HepG2 (cell line): ENCODE measurements at regions of chr1 and their contacts with region 1.

Region 1: DNA sequence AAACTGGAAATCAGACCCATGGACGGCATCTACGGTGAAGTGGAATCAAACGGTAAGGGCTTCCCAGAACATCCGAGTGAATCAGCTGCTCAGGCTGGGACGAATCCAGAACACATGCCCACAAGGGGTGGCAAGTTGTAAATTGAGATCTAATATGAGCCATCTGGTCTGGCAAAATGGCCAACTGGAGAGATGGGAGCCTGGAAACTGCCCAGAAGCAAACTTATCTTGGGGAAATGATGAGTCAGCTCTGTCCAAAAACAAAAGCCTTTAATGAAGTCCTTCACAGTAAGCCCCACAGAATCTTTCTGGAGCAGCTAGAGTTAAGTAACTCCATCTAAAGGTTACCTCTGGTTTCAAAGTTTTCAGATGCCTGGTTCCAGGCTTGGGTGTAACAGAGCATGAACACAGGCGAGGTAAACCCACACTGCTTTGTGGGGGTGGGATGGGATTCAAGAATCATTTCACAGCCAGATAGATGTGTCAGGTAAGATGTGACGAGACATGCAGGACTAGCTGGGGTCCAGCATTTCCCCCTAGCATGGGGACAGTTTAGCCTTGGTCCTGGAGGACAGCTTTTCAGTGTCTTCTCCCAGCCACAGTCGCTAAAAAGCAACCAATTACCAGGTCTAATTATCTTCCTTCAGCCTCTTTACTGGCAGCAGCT is 10.5 kb upstream of the SRP9 start:
- DNase-seq: peak; percentile 56
- ATAC-seq: peak; percentile 1; the same call in 2 of the 3 replicates
- H3K4me3 ChIP-seq: peak overlapping the region; percentile 14 to 69 (median 52)
- H3K27ac ChIP-seq: peak overlapping the region; percentile 79
- H3K4me1 ChIP-seq: peaks cover 90% of the 10 kb centered on the region
- H3K27me3 ChIP-seq: no peaks in the 10 kb centered on the region
- CTCF ChIP-seq: no peak
- EP300 ChIP-seq: no peak
- POLR2A ChIP-seq: peak in 1 of 2 experiments; percentile 50; a peak in 2 of 4 replicates
- RAD21 ChIP-seq: no peak

Region 2: GRCh38 chr1:225652729-225653462 is 114.2 kb before region 1 on chr1 and contains the start of gene ENAH:
- CTCF ChIA-PET with region 1: no interaction called
- POLR2A ChIA-PET with region 1: interaction called, 27 read pairs
- in situ Hi-C with region 1: loop called (anchors 5 kb)
- intact Hi-C with region 1: loop called (anchors 2 kb)
- DNase-seq: peak; percentile 49
- ATAC-seq: peak; percentile 80
- H3K4me3 ChIP-seq: peak within 1 kb of the TSS; percentile 86 to 98 (median 94)
- H3K27ac ChIP-seq: peak within 1 kb of the TSS; percentile 66
- H3K4me1 ChIP-seq: peaks cover 57% of the 10 kb centered on the region
- H3K27me3 ChIP-seq: no peaks in the 10 kb centered on the region; a peak in 1 of 5 replicates
- CTCF ChIP-seq: no peak
- EP300 ChIP-seq: no peak
- POLR2A ChIP-seq: peak in 1 of 2 experiments; percentile 60; a peak in 3 of 4 replicates
- RAD21 ChIP-seq: 0 out of 2 replicates have a peak, but pooled peaks have one; percentile 46
- total RNA-seq, gene ENAH: 58.3 and 60.2 TPM in 2 replicates

Region 3: GRCh38 chr1:225694151-225694603 is 72.9 kb before region 1 on chr1:
- CTCF ChIA-PET with region 1: no interaction called
- POLR2A ChIA-PET with region 1: interaction called, 49 read pairs
- in situ Hi-C with region 1: loop called (anchors 5 kb)
- intact Hi-C with region 1: loop called (anchors 5 kb)
- DNase-seq: peak; percentile 98
- ATAC-seq: peak; percentile 98
- H3K4me3 ChIP-seq: no peak overlapping the region
- H3K27ac ChIP-seq: peak overlapping the region; percentile 63
- H3K4me1 ChIP-seq: peaks cover 78% of the 10 kb centered on the region
- H3K27me3 ChIP-seq: no peaks in the 10 kb centered on the region
- CTCF ChIP-seq: no peak
- EP300 ChIP-seq: peak; percentile 46 to 89; a peak in 3 of 4 replicates
- POLR2A ChIP-seq: no peak
- RAD21 ChIP-seq: no peak

Region 4: GRCh38 chr1:225735252-225736149 is 31.6 kb before region 1 on chr1:
- CTCF ChIA-PET with region 1: interaction called, 4 read pairs
- POLR2A ChIA-PET with region 1: interaction called, 36 read pairs
- in situ Hi-C with region 1: no loop called
- intact Hi-C with region 1: loop called (anchors 5 kb)
- DNase-seq: peak; percentile 72
- ATAC-seq: peak; percentile 87
- H3K4me3 ChIP-seq: peak overlapping the region; percentile 6 to 53 (median 35); a peak in 3 of 6 replicates
- H3K27ac ChIP-seq: no peak overlapping the region
- H3K4me1 ChIP-seq: peaks cover 67% of the 10 kb centered on the region
- H3K27me3 ChIP-seq: peaks cover 0 to 5% of the 10 kb centered on the region in 2 experiments; a peak in 1 of 5 replicates
- CTCF ChIP-seq: peak; percentile 43
- EP300 ChIP-seq: no peak
- POLR2A ChIP-seq: no peak
- RAD21 ChIP-seq: no peak

Region 5: DNA sequence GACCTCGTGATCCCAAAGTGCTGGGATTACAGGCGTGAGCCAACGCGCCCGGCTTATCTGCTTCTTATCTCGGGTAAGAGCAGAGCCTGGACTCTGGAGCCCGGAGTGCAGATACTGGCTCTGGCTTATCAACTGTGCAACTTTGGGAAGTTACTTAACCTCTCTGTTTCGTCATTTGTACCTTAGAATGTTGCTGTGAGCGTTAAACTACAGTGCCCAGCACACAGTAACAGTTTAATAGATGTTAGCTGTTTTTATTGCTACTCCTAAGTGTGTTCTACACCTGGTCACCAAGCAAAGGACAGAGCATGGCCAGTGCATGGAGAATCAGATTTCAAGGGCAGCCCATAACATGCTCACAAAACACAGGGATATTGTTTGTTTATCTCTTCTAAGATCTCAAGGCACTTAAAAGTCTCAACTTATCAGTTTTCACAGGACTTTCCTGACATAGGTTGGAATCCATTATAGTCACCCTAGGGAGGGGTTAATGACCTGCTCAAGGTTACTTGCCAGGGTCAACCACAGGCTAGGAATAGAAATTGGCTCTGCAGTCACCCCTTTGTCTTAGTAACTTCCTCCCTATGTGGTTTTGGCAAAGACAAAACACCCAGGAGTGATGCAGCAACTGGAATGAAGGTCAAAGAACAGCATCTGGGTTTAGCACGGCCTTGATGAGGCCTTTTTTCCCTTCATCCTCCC is 12.0 kb before region 1 on chr1:
- CTCF ChIA-PET with region 1: no interaction called
- POLR2A ChIA-PET with region 1: interaction called, 43 read pairs
- in situ Hi-C with region 1: no loop called
- intact Hi-C with region 1: loop called (anchors 2 kb)
- DNase-seq: peak; percentile 93
- ATAC-seq: peak; percentile 86
- H3K4me3 ChIP-seq: no peak overlapping the region; a peak in 1 of 6 replicates
- H3K27ac ChIP-seq: peak overlapping the region; percentile 74
- H3K4me1 ChIP-seq: peaks cover 72% of the 10 kb centered on the region
- H3K27me3 ChIP-seq: no peaks in the 10 kb centered on the region
- CTCF ChIP-seq: no peak
- EP300 ChIP-seq: peak in 1 of 2 experiments; percentile 69; a peak in 2 of 4 replicates
- POLR2A ChIP-seq: no peak
- RAD21 ChIP-seq: no peak